Vagina (tissue), 2 donors: ENCODE measurements at regions of chr7 and their contacts with region 1.

Region 1: DNA sequence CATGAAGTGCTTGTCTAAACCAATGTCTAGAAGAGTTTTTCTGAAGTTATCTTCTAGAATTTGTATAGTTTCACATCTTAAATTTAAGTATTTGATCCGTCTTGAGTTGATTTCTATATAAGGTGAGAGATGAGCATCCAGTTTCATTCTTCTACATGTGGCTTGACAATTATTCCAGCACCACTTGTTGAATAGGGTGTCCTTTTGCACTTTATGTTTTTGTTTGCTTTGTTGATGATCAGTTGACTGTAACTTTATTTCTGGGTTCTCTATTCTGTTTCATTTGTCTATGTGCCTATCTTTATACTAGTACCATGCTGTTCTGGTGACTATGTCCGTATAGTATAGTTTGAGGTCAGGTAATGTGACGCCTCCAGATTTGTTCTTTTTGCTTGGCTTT is 426.6 kb upstream of the CHRM2 start:
- DNase-seq: no peak
- H3K4me3 ChIP-seq: no peak overlapping the region
- H3K27ac ChIP-seq: no peak overlapping the region
- H3K4me1 ChIP-seq: no peaks in the 10 kb centered on the region
- H3K27me3 ChIP-seq: no peaks in the 10 kb centered on the region
- CTCF ChIP-seq: no peak
- POLR2A ChIP-seq: no peak

Region 2: DNA sequence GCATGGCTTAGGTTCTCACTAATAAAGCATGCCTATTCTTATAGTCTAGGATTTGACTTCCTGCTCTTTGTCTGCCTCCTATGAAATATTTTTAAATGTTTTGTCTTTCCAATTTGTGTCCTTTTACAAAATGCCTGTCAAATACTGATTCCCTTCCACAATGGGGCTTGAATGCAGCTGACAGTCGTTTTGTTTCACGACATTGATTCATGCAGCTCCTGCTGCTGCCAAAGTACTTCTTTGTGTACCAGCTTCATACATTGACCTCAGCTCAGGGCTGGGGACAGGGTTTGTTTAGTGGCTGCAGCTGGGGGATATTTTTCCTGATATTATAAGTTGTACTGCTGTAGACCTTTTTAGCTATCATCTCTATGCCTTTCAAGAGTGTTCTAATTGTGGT is 54.7 kb after region 1 on chr7:
- intact Hi-C with region 1: loop called (anchors 10 kb)
- DNase-seq: no peak
- H3K4me3 ChIP-seq: no peak overlapping the region
- H3K27ac ChIP-seq: no peak overlapping the region
- H3K4me1 ChIP-seq: no peaks in the 10 kb centered on the region
- H3K27me3 ChIP-seq: no peaks in the 10 kb centered on the region
- CTCF ChIP-seq: no peak
- POLR2A ChIP-seq: no peak

Region 3: GRCh38 chr7:137423321-137423720 is 981.5 kb after region 1 on chr7:
- intact Hi-C with region 1: no loop called
- DNase-seq: no peak
- H3K4me3 ChIP-seq: no peak overlapping the region
- H3K27ac ChIP-seq: no peak overlapping the region
- H3K4me1 ChIP-seq: no peaks in the 10 kb centered on the region
- H3K27me3 ChIP-seq: no peaks in the 10 kb centered on the region
- CTCF ChIP-seq: no peak
- POLR2A ChIP-seq: no peak